ENCODE measurements at regions of chr15 and their contacts with region 1.

Region 1: DNA sequence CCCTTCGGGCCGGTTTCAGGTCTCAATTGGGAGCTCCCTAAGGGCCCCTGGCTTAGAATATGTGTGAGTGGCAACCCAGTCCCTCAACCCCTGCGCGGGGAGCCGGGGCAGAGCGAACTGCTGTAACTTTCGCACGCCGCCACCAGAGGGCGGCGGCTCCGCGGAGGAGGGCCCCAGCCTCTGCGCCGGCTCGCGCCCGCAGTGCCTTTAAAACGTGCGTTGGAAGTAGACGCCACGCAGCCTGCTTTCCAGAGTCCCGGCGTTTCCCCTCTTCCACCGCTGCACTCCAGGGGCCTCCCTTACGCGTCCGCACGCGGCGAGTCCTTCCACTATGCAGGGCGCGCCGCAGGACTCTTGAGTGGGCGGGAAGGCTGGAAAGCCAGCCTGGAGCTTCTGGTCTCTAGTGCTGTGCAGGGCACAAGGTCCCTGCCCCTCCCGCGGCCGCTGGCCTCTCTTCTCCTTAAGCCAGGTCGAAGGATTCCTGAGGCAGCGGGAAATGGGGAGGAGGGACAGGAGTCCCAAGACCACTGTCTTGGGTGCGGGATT is 23.7 kb upstream of the RNU6-1 start:
- DNase-seq: peak; percentile 83
- H3K4me3 Mint-ChIP-seq: peak overlapping the region; percentile 83
- H3K27ac Mint-ChIP-seq: no peak overlapping the region
- H3K4me1 Mint-ChIP-seq: peaks cover 10% of the 10 kb centered on the region
- H3K27me3 Mint-ChIP-seq: peaks cover 14% of the 10 kb centered on the region
- CTCF ChIP-seq: peak; percentile 96

Region 2: DNA sequence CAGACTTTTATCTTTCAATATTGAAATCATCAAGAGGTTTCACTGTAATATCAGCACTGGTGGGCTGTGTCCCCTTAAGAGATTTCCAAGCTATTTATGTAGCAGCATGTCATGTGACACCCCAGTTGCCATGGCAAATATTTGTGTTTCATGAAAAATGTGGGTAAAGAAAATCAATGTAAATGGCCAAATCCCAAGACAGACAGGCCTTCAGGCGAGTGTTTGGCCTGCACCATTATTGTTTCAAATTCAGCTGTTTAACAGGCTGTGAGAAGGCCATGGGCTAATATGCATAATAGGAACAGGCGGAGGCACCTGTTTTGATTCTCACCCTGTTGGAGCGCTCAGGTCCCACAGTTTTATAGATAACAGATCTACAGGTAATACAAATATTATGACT is 504.7 kb before region 1 on chr15:
- CTCF ChIA-PET with region 1: no interaction called
- intact Hi-C with region 1: no loop called
- DNase-seq: no peak
- H3K4me3 Mint-ChIP-seq: no peak overlapping the region
- H3K27ac Mint-ChIP-seq: no peak overlapping the region
- H3K4me1 Mint-ChIP-seq: no peaks in the 10 kb centered on the region
- H3K27me3 Mint-ChIP-seq: no peaks in the 10 kb centered on the region
- CTCF ChIP-seq: no peak

Region 3: GRCh38 chr15:67967871-67968431 is 104.4 kb after region 1 on chr15:
- CTCF ChIA-PET with region 1: interaction called, 3 read pairs
- intact Hi-C with region 1: loop called (anchors 10 kb)
- DNase-seq: peak; percentile 71
- H3K4me3 Mint-ChIP-seq: peak overlapping the region; percentile 51
- H3K27ac Mint-ChIP-seq: no peak overlapping the region
- H3K4me1 Mint-ChIP-seq: peaks cover 21% of the 10 kb centered on the region
- H3K27me3 Mint-ChIP-seq: no peaks in the 10 kb centered on the region
- CTCF ChIP-seq: no peak

Region 4: DNA sequence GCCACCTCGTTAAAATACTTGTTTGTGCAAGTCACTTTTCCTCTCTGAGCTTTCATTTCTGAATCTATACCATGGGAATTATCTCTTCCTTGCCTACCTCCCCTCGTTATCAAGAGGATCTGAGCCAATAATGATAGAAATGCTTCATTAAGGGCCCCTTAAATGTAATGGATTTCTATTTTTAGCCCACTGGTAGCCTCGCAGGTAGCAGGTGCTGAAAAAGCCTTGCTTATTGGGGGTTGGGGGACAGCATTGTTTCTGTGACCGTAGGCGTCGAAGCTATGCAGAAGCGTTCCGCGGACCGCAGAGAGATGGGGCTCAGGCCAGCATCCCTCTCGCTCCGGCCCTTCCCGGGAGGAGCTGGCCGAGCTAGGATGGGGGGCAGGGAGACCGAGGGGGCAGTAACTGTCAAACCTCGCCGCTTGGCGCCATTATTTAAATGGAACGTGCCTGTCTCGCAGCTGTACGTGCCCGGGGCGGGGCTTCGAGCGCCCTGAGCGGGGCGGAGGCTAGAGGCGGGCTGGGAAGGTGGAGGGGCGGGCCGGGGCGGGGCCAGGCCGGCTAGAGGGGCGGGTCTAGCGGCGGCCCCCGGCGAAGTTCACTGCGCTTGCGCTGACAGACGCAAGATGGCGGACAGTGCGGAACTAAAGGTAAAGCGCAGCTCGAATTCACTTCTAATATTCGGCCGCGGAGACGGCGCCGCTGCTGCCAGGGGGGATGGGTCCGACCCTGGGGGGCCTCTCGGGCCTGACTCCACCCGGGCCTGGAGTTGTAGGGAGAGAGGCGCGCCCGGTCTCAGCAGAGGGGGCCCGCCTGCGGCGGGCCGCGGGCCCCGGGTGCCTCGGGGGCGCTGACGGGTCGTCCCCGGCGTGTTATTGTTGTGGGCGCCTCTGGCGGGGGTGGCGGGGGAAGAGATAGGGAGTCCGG is 190.4 kb after region 1 on chr15 and contains the start of gene PIAS1:
- CTCF ChIA-PET with region 1: interaction called, 5 read pairs
- intact Hi-C with region 1: loop called (anchors 5 kb)
- DNase-seq: peak; percentile 98
- H3K4me3 Mint-ChIP-seq: peak within 1 kb of the TSS; percentile 85
- H3K27ac Mint-ChIP-seq: peak within 1 kb of the TSS; percentile 22
- H3K4me1 Mint-ChIP-seq: peaks cover 42% of the 10 kb centered on the region
- H3K27me3 Mint-ChIP-seq: no peaks in the 10 kb centered on the region
- CTCF ChIP-seq: no peak
- total RNA-seq, gene PIAS1: 51.7 and 60.8 TPM in 2 replicates

Region 5: DNA sequence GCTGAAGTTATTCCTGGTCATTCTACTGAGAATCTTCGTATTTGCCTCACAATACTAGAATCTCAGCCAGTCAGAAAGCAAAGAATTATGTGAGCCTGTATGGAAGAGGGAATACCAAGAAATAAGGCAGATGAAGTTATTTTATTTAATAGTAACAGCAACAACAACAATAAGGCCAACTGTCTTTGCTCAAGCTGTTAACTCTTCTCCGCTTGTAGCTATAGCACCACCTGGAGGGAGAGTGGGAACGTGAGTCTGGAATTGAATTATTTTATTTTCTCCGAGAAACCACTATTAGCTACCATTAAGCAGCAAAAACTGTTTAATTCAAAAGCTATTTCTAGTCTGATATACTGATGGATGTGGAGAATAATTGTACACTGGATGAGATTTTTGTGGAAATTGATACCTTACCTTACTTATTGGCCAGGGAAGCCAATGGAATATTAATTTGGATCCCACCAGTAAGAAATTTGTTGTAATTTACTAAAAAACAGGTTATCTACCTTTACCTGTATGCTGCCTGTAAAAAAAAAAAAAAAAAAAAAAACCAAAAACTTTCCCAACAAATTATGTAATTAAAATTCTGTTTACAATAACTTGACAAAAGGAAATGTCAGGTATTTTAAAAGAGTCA is 291.5 kb after region 1 on chr15:
- CTCF ChIA-PET with region 1: interaction called, 18 read pairs
- intact Hi-C with region 1: loop called (anchors 1 kb)
- DNase-seq: peak; percentile 63
- H3K4me3 Mint-ChIP-seq: no peak overlapping the region
- H3K27ac Mint-ChIP-seq: no peak overlapping the region
- H3K4me1 Mint-ChIP-seq: no peaks in the 10 kb centered on the region
- H3K27me3 Mint-ChIP-seq: no peaks in the 10 kb centered on the region
- CTCF ChIP-seq: peak; percentile 69